ENCODE measurements at regions of chr14 and their contacts with region 1.

Region 1: GRCh38 chr14:24431569-24432258 is 2.0 kb downstream of the KHNYN start:
- DNase-seq: peak; percentile 85 to 87 (median 85)
- H3K4me3 ChIP-seq: peak overlapping the region in 1 of 2 donors; percentile 87
- H3K4me3 Mint-ChIP-seq: peak overlapping the region; percentile 90 to 95 (median 92)
- H3K27ac ChIP-seq: peak overlapping the region; percentile 93
- H3K27ac Mint-ChIP-seq: peak overlapping the region; percentile 84 to 98 (median 96)
- H3K4me1 ChIP-seq: peaks cover 61% of the 10 kb centered on the region
- H3K4me1 Mint-ChIP-seq: peaks cover 27 to 66% (median 45%) of the 10 kb centered on the region in 4 donors
- H3K27me3 ChIP-seq: no peaks in the 10 kb centered on the region
- H3K27me3 Mint-ChIP-seq: no peaks in the 10 kb centered on the region

Region 2: GRCh38 chr14:24013654-24014514 is 417.8 kb before region 1 on chr14:
- CTCF ChIA-PET with region 1: no interaction called
- POLR2A ChIA-PET with region 1: no interaction called
- intact Hi-C with region 1: loop called (anchors 5 kb)
- DNase-seq: peak; percentile 60 to 77 (median 70)
- H3K4me3 ChIP-seq: no peak overlapping the region
- H3K4me3 Mint-ChIP-seq: no peak overlapping the region
- H3K27ac ChIP-seq: no peak overlapping the region
- H3K27ac Mint-ChIP-seq: no peak overlapping the region
- H3K4me1 ChIP-seq: peaks cover 19% of the 10 kb centered on the region
- H3K4me1 Mint-ChIP-seq: peaks cover 19 to 27% (median 23%) of the 10 kb centered on the region in 4 donors
- H3K27me3 ChIP-seq: no peaks in the 10 kb centered on the region
- H3K27me3 Mint-ChIP-seq: peaks cover 0 to 3% of the 10 kb centered on the region in 2 donors

Region 3: GRCh38 chr14:24114536-24115450 is 316.9 kb before region 1 on chr14 and contains the starts of genes DCAF11 and NRL:
- CTCF ChIA-PET with region 1: interaction called, 4 read pairs
- POLR2A ChIA-PET with region 1: interaction called, 20 read pairs
- intact Hi-C with region 1: no loop called
- DNase-seq: peak; percentile 100
- H3K4me3 ChIP-seq: peak within 1 kb of the TSS; percentile 97 to 98
- H3K4me3 Mint-ChIP-seq: peak within 1 kb of the TSS; percentile 95 to 99 (median 98)
- H3K27ac ChIP-seq: peak within 1 kb of the TSS; percentile 98
- H3K27ac Mint-ChIP-seq: peak within 1 kb of the TSS; percentile 98 to 100 (median 99)
- H3K4me1 ChIP-seq: peaks cover 29% of the 10 kb centered on the region
- H3K4me1 Mint-ChIP-seq: peaks cover 19 to 44% (median 30%) of the 10 kb centered on the region in 4 donors
- H3K27me3 ChIP-seq: no peaks in the 10 kb centered on the region
- H3K27me3 Mint-ChIP-seq: no peaks in the 10 kb centered on the region
- total RNA-seq, gene DCAF11: 71.5 to 75.8 TPM
- total RNA-seq, gene NRL: 2.9 to 4.5 TPM

Region 4: GRCh38 chr14:24215495-24216344 is 216.0 kb before region 1 on chr14 and contains the start of gene MDP1:
- CTCF ChIA-PET with region 1: interaction called, 8 read pairs
- POLR2A ChIA-PET with region 1: interaction called, 31 read pairs
- intact Hi-C with region 1: no loop called
- DNase-seq: peak; percentile 86 to 92 (median 88)
- H3K4me3 ChIP-seq: peak within 1 kb of the TSS; percentile 94 to 95
- H3K4me3 Mint-ChIP-seq: peak within 1 kb of the TSS; percentile 90 to 97 (median 93)
- H3K27ac ChIP-seq: peak within 1 kb of the TSS; percentile 100
- H3K27ac Mint-ChIP-seq: peak within 1 kb of the TSS; percentile 95 to 100 (median 99)
- H3K4me1 ChIP-seq: peaks cover 42% of the 10 kb centered on the region
- H3K4me1 Mint-ChIP-seq: peaks cover 30 to 56% (median 44%) of the 10 kb centered on the region in 4 donors
- H3K27me3 ChIP-seq: no peaks in the 10 kb centered on the region
- H3K27me3 Mint-ChIP-seq: no peaks in the 10 kb centered on the region
- total RNA-seq, gene MDP1: 12.5 to 15.3 TPM

Region 5: DNA sequence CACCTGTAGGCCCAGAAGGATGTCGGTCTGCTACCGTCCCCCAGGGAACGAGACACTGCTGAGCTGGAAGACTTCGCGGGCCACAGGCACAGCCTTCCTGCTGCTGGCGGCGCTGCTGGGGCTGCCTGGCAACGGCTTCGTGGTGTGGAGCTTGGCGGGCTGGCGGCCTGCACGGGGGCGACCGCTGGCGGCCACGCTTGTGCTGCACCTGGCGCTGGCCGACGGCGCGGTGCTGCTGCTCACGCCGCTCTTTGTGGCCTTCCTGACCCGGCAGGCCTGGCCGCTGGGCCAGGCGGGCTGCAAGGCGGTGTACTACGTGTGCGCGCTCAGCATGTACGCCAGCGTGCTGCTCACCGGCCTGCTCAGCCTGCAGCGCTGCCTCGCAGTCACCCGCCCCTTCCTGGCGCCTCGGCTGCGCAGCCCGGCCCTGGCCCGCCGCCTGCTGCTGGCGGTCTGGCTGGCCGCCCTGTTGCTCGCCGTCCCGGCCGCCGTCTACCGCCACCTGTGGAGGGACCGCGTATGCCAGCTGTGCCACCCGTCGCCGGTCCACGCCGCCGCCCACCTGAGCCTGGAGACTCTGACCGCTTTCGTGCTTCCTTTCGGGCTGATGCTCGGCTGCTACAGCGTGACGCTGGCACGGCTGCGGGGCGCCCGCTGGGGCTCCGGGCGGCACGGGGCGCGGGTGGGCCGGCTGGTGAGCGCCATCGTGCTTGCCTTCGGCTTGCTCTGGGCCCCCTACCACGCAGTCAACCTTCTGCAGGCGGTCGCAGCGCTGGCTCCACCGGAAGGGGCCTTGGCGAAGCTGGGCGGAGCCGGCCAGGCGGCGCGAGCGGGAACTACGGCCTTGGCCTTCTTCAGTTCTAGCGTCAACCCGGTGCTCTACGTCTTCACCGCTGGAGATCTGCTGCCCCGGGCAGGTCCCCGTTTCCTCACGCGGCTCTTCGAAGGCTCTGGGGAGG is 120.8 kb before region 1 on chr14 and contains the start of gene LTB4R:
- CTCF ChIA-PET with region 1: interaction called, 33 read pairs
- POLR2A ChIA-PET with region 1: interaction called, 91 read pairs
- intact Hi-C with region 1: loop called (anchors 5 kb)
- DNase-seq: peak; percentile 73 to 79 (median 77)
- H3K4me3 ChIP-seq: peak within 1 kb of the TSS; percentile 55 to 58
- H3K4me3 Mint-ChIP-seq: peak within 1 kb of the TSS; percentile 83 to 94 (median 88)
- H3K27ac ChIP-seq: peak within 1 kb of the TSS; percentile 72
- H3K27ac Mint-ChIP-seq: peak within 1 kb of the TSS; percentile 90 to 97 (median 95)
- H3K4me1 ChIP-seq: peaks cover 71% of the 10 kb centered on the region
- H3K4me1 Mint-ChIP-seq: peaks cover 58 to 89% (median 72%) of the 10 kb centered on the region in 4 donors
- H3K27me3 ChIP-seq: no peaks in the 10 kb centered on the region
- H3K27me3 Mint-ChIP-seq: no peaks in the 10 kb centered on the region
- total RNA-seq, gene LTB4R: 19.5 to 20.0 TPM

Region 6: DNA sequence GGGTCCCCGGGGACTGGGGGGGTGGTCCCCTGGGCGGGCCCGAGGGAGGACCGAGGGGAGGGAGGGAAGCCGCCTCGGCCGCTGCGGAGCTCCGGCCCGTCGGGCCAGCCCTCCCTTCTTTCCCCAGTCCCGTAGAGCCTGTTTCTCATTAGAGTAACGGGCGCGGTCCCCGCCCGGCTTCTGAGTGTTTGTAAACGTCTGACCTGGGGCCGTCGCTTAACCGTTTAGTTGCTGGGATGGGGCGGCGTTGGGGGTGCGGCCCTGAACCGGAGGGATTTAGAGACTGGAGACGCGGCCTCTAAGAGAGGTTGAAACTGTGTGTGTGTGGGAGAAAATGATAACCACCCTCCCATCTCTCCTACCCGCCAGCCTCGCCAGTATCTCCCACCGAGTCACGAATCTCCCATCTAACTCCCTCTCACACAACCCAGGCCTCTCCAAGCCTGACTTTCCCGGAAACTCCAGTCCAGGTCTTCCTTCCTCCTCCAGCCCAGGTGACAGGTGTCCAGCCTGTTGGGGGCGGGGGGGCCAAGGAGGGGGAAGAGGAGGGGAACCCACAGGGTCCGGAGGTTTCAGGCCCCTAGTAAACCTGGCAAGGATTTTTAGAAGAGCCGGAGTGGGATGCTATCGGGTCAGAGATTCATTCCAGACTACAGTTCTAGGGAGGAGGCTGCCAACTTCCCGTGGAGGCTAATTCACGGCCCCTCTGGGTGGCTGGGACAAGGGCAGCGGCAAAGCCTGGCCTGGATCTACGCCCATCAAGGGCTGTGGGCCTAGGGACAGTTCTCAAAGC is 64.8 kb before region 1 on chr14:
- CTCF ChIA-PET with region 1: interaction called, 41 read pairs
- POLR2A ChIA-PET with region 1: interaction called, 29 read pairs
- intact Hi-C with region 1: loop called (anchors 1 kb)
- DNase-seq: peak in 3 of 5 donors; percentile 16 to 22 (median 21)
- H3K4me3 ChIP-seq: no peak overlapping the region
- H3K4me3 Mint-ChIP-seq: peak overlapping the region; percentile 68 to 87 (median 80)
- H3K27ac ChIP-seq: no peak overlapping the region
- H3K27ac Mint-ChIP-seq: peak overlapping the region in 2 of 7 donors; percentile 53 to 81
- H3K4me1 ChIP-seq: peaks cover 35% of the 10 kb centered on the region
- H3K4me1 Mint-ChIP-seq: peaks cover 15 to 31% (median 22%) of the 10 kb centered on the region in 4 donors
- H3K27me3 ChIP-seq: peaks cover 29% of the 10 kb centered on the region
- H3K27me3 Mint-ChIP-seq: peaks cover 31 to 34% of the 10 kb centered on the region in 2 donors

Region 7: GRCh38 chr14:24442273-24443052 is 10.7 kb after region 1 on chr14 and contains the start of gene SDR39U1:
- CTCF ChIA-PET with region 1: interaction called, 55 read pairs
- POLR2A ChIA-PET with region 1: interaction called, 215 read pairs
- intact Hi-C with region 1: loop called (anchors 1 kb)
- DNase-seq: peak; percentile 95 to 99 (median 98)
- H3K4me3 ChIP-seq: peak within 1 kb of the TSS; percentile 73 to 85
- H3K4me3 Mint-ChIP-seq: peak within 1 kb of the TSS; percentile 87 to 97 (median 92)
- H3K27ac ChIP-seq: peak within 1 kb of the TSS; percentile 93
- H3K27ac Mint-ChIP-seq: peak within 1 kb of the TSS; percentile 93 to 99 (median 99)
- H3K4me1 ChIP-seq: peaks cover 27% of the 10 kb centered on the region
- H3K4me1 Mint-ChIP-seq: peaks cover 20 to 57% (median 41%) of the 10 kb centered on the region in 4 donors
- H3K27me3 ChIP-seq: no peaks in the 10 kb centered on the region
- H3K27me3 Mint-ChIP-seq: no peaks in the 10 kb centered on the region
- total RNA-seq, gene SDR39U1: 102 to 109 TPM

Measured in CD4-positive, alpha-beta memory T cell (primary cell).